ENCODE measurements at regions of chr6 and their contacts with region 1.

Region 1: DNA sequence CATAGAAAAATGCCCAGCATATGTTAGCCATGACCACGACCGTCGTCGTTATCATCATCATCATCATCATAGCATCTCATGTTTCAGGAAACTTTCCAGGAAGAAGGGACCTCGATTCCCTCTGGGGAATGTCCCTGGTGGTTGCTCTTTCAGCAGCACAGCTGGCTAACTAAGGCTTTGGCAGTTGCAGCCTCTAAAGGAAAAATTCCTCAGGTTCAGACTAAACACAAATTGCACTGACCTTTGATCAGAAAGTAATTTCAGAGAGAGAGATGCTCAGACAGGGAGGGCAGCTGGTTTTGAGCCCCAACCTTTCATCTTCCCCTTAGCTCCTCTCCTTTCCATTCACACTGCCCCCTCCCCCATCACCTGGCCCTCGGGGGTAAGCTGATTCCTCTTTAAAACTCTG is 5.6 kb upstream of the CFB start:
- DNase-seq: peak; percentile 78
- ATAC-seq: peak; percentile 59
- H3K4me3 ChIP-seq: no peak overlapping the region
- H3K27ac ChIP-seq: peak overlapping the region; percentile 48
- H3K4me1 ChIP-seq: peaks cover 62% of the 10 kb centered on the region
- H3K27me3 ChIP-seq: no peaks in the 10 kb centered on the region
- CTCF ChIP-seq: no peak
- EP300 ChIP-seq: no peak
- POLR2A ChIP-seq: no peak
- RAD21 ChIP-seq: no peak

Region 2: GRCh38 chr6:31927863-31928671 is 12.2 kb before region 1 on chr6:
- CTCF ChIA-PET with region 1: no interaction called
- POLR2A ChIA-PET with region 1: interaction called, 151 read pairs
- in situ Hi-C with region 1: no loop called
- intact Hi-C with region 1: loop called (anchors 1 kb)
- DNase-seq: no peak
- ATAC-seq: peak; percentile 67
- H3K4me3 ChIP-seq: peak overlapping the region; percentile 69 to 81 (median 72)
- H3K27ac ChIP-seq: peak overlapping the region; percentile 88
- H3K4me1 ChIP-seq: peaks cover 69% of the 10 kb centered on the region
- H3K27me3 ChIP-seq: no peaks in the 10 kb centered on the region; a peak in 1 of 5 replicates
- CTCF ChIP-seq: no peak
- EP300 ChIP-seq: no peak
- POLR2A ChIP-seq: no peak
- RAD21 ChIP-seq: no peak

Measured in HepG2 (cell line).